MCF 10A (cell line): ENCODE measurements at regions of chr1 and their contacts with region 1.

Region 1: GRCh38 chr1:12619792-12620487 is 1.9 kb upstream of the DHRS3 start:
- DNase-seq: peak; percentile 86
- H3K4me3 Mint-ChIP-seq: peak overlapping the region; percentile 95
- H3K27ac Mint-ChIP-seq: no peak overlapping the region
- H3K4me1 Mint-ChIP-seq: peaks cover 29% of the 10 kb centered on the region
- H3K27me3 Mint-ChIP-seq: no peaks in the 10 kb centered on the region
- CTCF ChIP-seq: peak; percentile 96

Region 2: DNA sequence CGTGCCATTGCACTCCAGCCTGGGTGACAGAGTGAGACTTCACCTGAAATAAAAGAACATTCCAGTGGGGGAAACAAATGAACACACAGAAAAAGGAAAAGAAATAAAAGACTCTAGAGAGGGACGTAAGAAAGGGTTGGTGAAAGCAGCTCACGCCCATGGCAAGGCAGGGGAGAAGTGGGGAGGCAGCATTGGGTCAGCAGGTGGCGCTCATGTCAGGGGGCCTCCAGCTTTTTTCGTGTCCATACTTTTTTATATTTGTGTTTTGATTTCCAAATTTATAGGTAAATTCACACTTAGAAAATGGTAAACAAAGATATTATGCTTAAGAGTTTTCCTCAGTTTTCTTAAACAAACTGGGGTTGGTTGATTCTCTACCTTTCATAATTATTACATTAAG is 344.6 kb before region 1 on chr1:
- CTCF ChIA-PET with region 1: interaction called, 9 read pairs
- POLR2A ChIA-PET with region 1: no interaction called
- intact Hi-C with region 1: loop called (anchors 1 kb)
- DNase-seq: peak; percentile 27
- H3K4me3 Mint-ChIP-seq: no peak overlapping the region
- H3K27ac Mint-ChIP-seq: no peak overlapping the region
- H3K4me1 Mint-ChIP-seq: no peaks in the 10 kb centered on the region
- H3K27me3 Mint-ChIP-seq: no peaks in the 10 kb centered on the region
- CTCF ChIP-seq: peak; percentile 34

Region 3: DNA sequence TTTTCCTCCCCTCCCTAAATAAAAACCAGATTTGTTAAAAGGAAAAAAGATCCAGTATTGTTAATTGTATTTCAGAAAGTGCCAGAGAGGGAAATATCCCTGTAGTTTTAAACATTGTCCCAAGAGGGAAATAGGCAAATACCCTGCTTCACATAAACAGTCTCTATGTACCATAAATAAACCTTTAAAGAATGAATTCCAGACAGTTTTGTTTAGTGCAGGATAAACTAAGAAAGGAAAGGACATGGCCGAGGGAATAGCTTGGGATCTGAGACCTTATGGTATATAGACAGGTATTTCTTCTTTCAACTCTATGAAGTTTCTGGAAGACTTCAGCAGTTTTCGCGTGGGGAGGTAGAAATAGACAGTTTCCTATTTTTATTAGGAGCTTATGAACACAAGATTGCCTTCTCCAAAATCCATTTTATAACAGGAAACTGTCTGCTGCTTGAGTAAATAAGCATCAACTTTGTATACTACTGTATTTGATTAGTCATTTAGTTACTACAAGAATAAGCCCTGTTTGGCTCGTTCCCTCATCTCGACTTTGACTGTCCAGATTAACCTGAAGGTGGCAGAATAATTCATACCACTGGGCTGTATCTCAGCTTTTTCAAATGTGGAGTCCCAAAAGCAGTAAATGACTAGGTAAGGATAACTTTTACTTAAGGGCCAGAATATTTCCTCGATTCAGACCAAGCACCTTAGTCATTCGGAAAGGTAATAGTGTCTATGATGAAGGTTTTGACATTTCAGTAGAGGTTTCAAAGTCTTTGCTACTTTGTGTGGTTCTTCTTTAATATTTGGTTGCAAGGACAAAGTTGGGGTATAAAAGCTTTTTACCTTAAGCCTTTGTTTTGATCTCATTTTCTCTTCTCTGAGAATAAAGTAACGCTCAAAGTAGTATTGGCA is 212.6 kb before region 1 on chr1:
- CTCF ChIA-PET with region 1: interaction called, 4 read pairs
- POLR2A ChIA-PET with region 1: interaction called, 5 read pairs
- intact Hi-C with region 1: loop called (anchors 1 kb)
- DNase-seq: peak; percentile 64
- H3K4me3 Mint-ChIP-seq: no peak overlapping the region
- H3K27ac Mint-ChIP-seq: no peak overlapping the region
- H3K4me1 Mint-ChIP-seq: no peaks in the 10 kb centered on the region
- H3K27me3 Mint-ChIP-seq: no peaks in the 10 kb centered on the region
- CTCF ChIP-seq: peak; percentile 27

Region 4: GRCh38 chr1:12477936-12478611 is 141.9 kb before region 1 on chr1:
- CTCF ChIA-PET with region 1: interaction called, 4 read pairs
- POLR2A ChIA-PET with region 1: interaction called, 14 read pairs
- intact Hi-C with region 1: loop called (anchors 5 kb)
- DNase-seq: peak; percentile 98
- H3K4me3 Mint-ChIP-seq: peak overlapping the region; percentile 9
- H3K27ac Mint-ChIP-seq: peak overlapping the region; percentile 17
- H3K4me1 Mint-ChIP-seq: peaks cover 34% of the 10 kb centered on the region
- H3K27me3 Mint-ChIP-seq: no peaks in the 10 kb centered on the region
- CTCF ChIP-seq: no peak

Region 5: GRCh38 chr1:12532438-12533315 is 87.3 kb before region 1 on chr1:
- CTCF ChIA-PET with region 1: no interaction called
- POLR2A ChIA-PET with region 1: no interaction called
- intact Hi-C with region 1: no loop called
- DNase-seq: no peak
- H3K4me3 Mint-ChIP-seq: no peak overlapping the region
- H3K27ac Mint-ChIP-seq: no peak overlapping the region
- H3K4me1 Mint-ChIP-seq: no peaks in the 10 kb centered on the region
- H3K27me3 Mint-ChIP-seq: peaks cover 19% of the 10 kb centered on the region
- CTCF ChIP-seq: no peak

Region 6: DNA sequence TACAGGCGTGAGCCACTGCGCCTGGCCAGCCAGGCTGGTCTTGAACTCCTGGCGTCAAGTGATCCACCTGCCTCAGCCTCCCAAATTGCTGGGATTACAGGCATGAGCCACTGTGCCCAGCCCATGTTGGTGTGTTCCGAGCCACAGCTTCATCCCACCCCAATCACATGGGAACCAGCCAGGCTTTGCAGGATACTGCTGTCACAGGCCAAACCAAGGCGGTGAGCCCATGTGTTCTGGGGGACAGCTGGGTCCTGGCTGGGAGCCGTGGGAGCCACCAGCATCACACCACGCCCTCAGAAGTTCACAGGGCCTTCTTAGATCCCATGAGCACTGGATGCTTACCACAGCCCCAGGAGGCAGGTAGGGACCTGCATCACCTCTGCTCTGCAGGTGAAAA is 58.8 kb before region 1 on chr1:
- CTCF ChIA-PET with region 1: no interaction called
- POLR2A ChIA-PET with region 1: no interaction called
- intact Hi-C with region 1: no loop called
- DNase-seq: no peak
- H3K4me3 Mint-ChIP-seq: no peak overlapping the region
- H3K27ac Mint-ChIP-seq: no peak overlapping the region
- H3K4me1 Mint-ChIP-seq: no peaks in the 10 kb centered on the region
- H3K27me3 Mint-ChIP-seq: no peaks in the 10 kb centered on the region
- CTCF ChIP-seq: no peak

Region 7: DNA sequence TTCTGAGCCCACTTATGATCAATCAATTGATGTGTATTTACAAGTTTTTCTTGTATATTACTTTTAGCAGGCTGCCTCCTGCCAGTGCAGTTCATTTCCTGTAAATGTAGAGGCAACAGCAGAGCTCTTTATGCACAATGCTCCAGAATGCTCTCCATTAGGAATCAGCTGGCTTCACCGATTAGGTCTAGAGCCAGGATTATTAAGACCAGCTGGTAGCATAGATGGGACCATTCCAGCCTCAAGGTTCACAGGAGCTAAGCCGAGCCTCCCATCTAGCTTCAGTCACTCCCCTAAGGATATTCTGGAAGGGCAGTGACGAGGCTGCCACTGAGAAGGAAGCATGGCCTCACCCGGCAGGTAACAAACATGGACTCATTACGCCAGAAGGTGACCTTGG is 38.8 kb before region 1 on chr1:
- CTCF ChIA-PET with region 1: no interaction called
- POLR2A ChIA-PET with region 1: no interaction called
- intact Hi-C with region 1: no loop called
- DNase-seq: no peak
- H3K4me3 Mint-ChIP-seq: no peak overlapping the region
- H3K27ac Mint-ChIP-seq: no peak overlapping the region
- H3K4me1 Mint-ChIP-seq: no peaks in the 10 kb centered on the region
- H3K27me3 Mint-ChIP-seq: no peaks in the 10 kb centered on the region
- CTCF ChIP-seq: no peak

Region 8: GRCh38 chr1:12604114-12604874 is 15.6 kb before region 1 on chr1:
- CTCF ChIA-PET with region 1: interaction called, 6 read pairs
- POLR2A ChIA-PET with region 1: interaction called, 11 read pairs
- intact Hi-C with region 1: loop called (anchors 1 kb)
- DNase-seq: peak; percentile 97
- H3K4me3 Mint-ChIP-seq: no peak overlapping the region
- H3K27ac Mint-ChIP-seq: no peak overlapping the region
- H3K4me1 Mint-ChIP-seq: peaks cover 10% of the 10 kb centered on the region
- H3K27me3 Mint-ChIP-seq: peaks cover 10% of the 10 kb centered on the region
- CTCF ChIP-seq: no peak

Region 9: GRCh38 chr1:12711536-12711935 is 91.6 kb after region 1 on chr1:
- CTCF ChIA-PET with region 1: no interaction called
- POLR2A ChIA-PET with region 1: no interaction called
- intact Hi-C with region 1: no loop called
- DNase-seq: no peak
- H3K4me3 Mint-ChIP-seq: no peak overlapping the region
- H3K27ac Mint-ChIP-seq: no peak overlapping the region
- H3K4me1 Mint-ChIP-seq: no peaks in the 10 kb centered on the region
- H3K27me3 Mint-ChIP-seq: no peaks in the 10 kb centered on the region
- CTCF ChIP-seq: no peak